Ascending aorta (tissue), 2 donors: ENCODE measurements at regions of chr12 and their contacts with region 1.

Region 1: GRCh38 chr12:8890313-8891085 is 23.8 kb upstream of the PHC1 start:
- DNase-seq: no peak
- H3K4me3 ChIP-seq: peak overlapping the region; percentile 45 to 60
- H3K27ac ChIP-seq: no peak overlapping the region
- H3K4me1 ChIP-seq: no peaks in the 10 kb centered on the region
- H3K27me3 ChIP-seq: no peaks in the 10 kb centered on the region
- CTCF ChIP-seq: peak; percentile 56 to 88 (median 87)

Region 2: DNA sequence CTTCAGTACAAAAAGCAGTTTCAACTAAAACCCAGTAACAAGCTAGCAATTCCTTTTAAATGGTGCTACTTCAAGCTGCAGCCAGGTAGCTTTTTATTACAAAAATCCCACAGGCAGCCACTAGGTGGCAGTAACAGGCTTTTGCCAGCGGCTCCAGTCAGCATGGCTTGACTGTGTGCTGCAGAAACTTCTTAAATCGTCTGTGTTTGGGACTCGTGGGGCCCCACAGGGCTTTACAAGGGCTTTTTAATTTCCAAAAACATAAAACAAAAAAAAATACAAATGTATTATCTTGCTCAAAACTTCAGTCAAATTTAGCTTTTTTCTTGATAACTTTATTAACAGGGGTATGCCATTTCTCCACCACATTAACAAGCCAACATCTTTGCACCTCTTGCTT is 346.2 kb before region 1 on chr12:
- intact Hi-C with region 1: loop called (anchors 10 kb)
- DNase-seq: peak in 1 of 2 donors; percentile 74
- H3K4me3 ChIP-seq: no peak overlapping the region
- H3K27ac ChIP-seq: no peak overlapping the region
- H3K4me1 ChIP-seq: no peaks in the 10 kb centered on the region
- H3K27me3 ChIP-seq: no peaks in the 10 kb centered on the region
- CTCF ChIP-seq: peak; percentile 68 to 97 (median 86)

Region 3: GRCh38 chr12:8662593-8662992 is 227.9 kb before region 1 on chr12 and contains the start of gene MFAP5:
- intact Hi-C with region 1: loop called (anchors 5 kb)
- DNase-seq: no peak
- H3K4me3 ChIP-seq: no peak within 1 kb of the TSS
- H3K27ac ChIP-seq: peak within 1 kb of the TSS in 1 of 2 donors; percentile 43
- H3K4me1 ChIP-seq: no peaks in the 10 kb centered on the region
- H3K27me3 ChIP-seq: no peaks in the 10 kb centered on the region
- CTCF ChIP-seq: no peak
- total RNA-seq, gene MFAP5: 174 TPM

Region 4: GRCh38 chr12:8687846-8688601 is 202.5 kb before region 1 on chr12:
- intact Hi-C with region 1: no loop called
- DNase-seq: peak; percentile 32 to 89
- H3K4me3 ChIP-seq: peak overlapping the region in 1 of 2 donors; percentile 29
- H3K27ac ChIP-seq: peak overlapping the region; percentile 67 to 84
- H3K4me1 ChIP-seq: peaks cover 0 to 25% of the 10 kb centered on the region in 2 donors
- H3K27me3 ChIP-seq: no peaks in the 10 kb centered on the region
- CTCF ChIP-seq: no peak

Region 5: GRCh38 chr12:8823565-8824300 is 66.8 kb before region 1 on chr12:
- intact Hi-C with region 1: loop called (anchors 2 kb)
- DNase-seq: no peak
- H3K4me3 ChIP-seq: no peak overlapping the region
- H3K27ac ChIP-seq: no peak overlapping the region
- H3K4me1 ChIP-seq: no peaks in the 10 kb centered on the region
- H3K27me3 ChIP-seq: no peaks in the 10 kb centered on the region
- CTCF ChIP-seq: peak; percentile 73 to 89 (median 73)